Activated CD4-positive, alpha-beta T cell treated with anti-CD3 and anti-CD28 coated beads for 36 hours (primary cell): ENCODE measurements at regions of chr1 and their contacts with region 1.

Region 1: GRCh38 chr1:213987927-213988506 is at the start of gene PROX1:
- DNase-seq: peak; percentile 72
- ATAC-seq: peak; percentile 86
- H3K4me3 Mint-ChIP-seq: peak within 1 kb of the TSS; percentile 81
- H3K27ac Mint-ChIP-seq: peak within 1 kb of the TSS; percentile 51
- H3K4me1 Mint-ChIP-seq: peaks cover 37% of the 10 kb centered on the region
- H3K27me3 Mint-ChIP-seq: peaks cover 91% of the 10 kb centered on the region
- total RNA-seq, gene PROX1: 0.09 to 0.14 TPM

Region 2: DNA sequence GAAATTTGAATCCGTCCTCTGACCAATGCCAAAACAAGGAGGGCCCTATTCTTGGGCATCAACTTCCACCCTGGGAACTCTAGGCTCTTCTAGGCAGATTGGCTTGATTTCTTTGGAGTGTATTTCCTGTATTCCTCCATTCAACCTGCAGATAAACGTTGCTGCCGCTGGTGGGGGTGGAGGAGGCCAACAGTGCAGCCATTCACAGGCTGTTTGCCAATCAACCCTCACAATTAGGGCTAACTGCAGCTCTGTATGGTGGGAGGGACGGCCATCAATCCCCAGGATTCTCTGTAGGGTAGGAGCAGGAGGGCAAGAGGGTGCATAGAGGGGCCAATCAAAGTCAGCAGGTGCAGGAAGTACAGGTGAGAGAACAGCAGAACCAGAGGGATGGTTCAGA is 273.4 kb before region 1 on chr1:
- CTCF ChIA-PET with region 1: no interaction called
- POLR2A ChIA-PET with region 1: no interaction called
- intact Hi-C with region 1: no loop called
- DNase-seq: no peak
- ATAC-seq: no peak
- H3K4me3 Mint-ChIP-seq: no peak overlapping the region
- H3K27ac Mint-ChIP-seq: no peak overlapping the region
- H3K4me1 Mint-ChIP-seq: peaks cover 14% of the 10 kb centered on the region
- H3K27me3 Mint-ChIP-seq: no peaks in the 10 kb centered on the region

Region 3: DNA sequence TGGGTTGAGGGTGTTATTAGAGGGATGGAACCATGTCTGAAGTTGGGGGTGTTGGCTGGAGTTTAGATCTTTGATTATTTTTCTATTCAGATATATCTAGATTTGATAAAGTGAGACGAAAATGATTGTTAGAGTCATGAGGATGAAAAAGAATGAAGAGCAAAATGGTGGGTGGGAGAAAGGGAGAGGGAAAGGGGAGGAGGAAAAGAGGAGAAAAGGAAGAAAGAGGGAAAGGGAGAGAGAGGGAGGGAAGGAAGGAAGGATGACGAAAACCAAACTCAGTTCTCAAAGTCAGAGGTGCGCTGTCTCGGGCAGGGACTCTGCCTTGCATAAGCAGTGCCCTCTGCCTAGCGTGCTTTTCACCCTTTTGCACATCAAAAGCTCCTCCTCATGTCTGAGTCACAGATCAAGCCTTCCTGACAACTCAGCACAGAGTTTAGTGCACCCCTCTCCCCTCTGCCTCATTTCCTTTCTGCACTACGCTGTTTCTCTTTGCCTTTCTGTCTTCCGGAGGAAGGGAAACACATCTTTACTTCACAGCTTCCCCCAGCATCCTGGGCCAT is 226.1 kb before region 1 on chr1:
- CTCF ChIA-PET with region 1: no interaction called
- POLR2A ChIA-PET with region 1: no interaction called
- intact Hi-C with region 1: loop called in 1 of 2 experiments (anchors 5 kb)
- DNase-seq: peak; percentile 69
- ATAC-seq: peak; percentile 100
- H3K4me3 Mint-ChIP-seq: peak overlapping the region; percentile 6
- H3K27ac Mint-ChIP-seq: peak overlapping the region; percentile 58
- H3K4me1 Mint-ChIP-seq: peaks cover 20% of the 10 kb centered on the region
- H3K27me3 Mint-ChIP-seq: no peaks in the 10 kb centered on the region

Region 4: GRCh38 chr1:213779228-213779883 is 208.7 kb before region 1 on chr1:
- CTCF ChIA-PET with region 1: no interaction called
- POLR2A ChIA-PET with region 1: no interaction called
- intact Hi-C with region 1: no loop called
- DNase-seq: no peak
- ATAC-seq: no peak
- H3K4me3 Mint-ChIP-seq: no peak overlapping the region
- H3K27ac Mint-ChIP-seq: no peak overlapping the region
- H3K4me1 Mint-ChIP-seq: peaks cover 14% of the 10 kb centered on the region
- H3K27me3 Mint-ChIP-seq: peaks cover 12% of the 10 kb centered on the region

Region 5: GRCh38 chr1:214012418-214012817 is 24.4 kb after region 1 on chr1:
- CTCF ChIA-PET with region 1: no interaction called
- POLR2A ChIA-PET with region 1: no interaction called
- intact Hi-C with region 1: no loop called
- DNase-seq: no peak
- ATAC-seq: no peak
- H3K4me3 Mint-ChIP-seq: no peak overlapping the region
- H3K27ac Mint-ChIP-seq: no peak overlapping the region
- H3K4me1 Mint-ChIP-seq: no peaks in the 10 kb centered on the region
- H3K27me3 Mint-ChIP-seq: peaks cover 2% of the 10 kb centered on the region

Region 6: GRCh38 chr1:215566556-215567490 is 1578.8 kb after region 1 on chr1 and contains the start of gene KCTD3:
- CTCF ChIA-PET with region 1: no interaction called
- POLR2A ChIA-PET with region 1: no interaction called
- intact Hi-C with region 1: loop called in 1 of 2 experiments (anchors 5 kb)
- DNase-seq: peak; percentile 76
- ATAC-seq: peak; percentile 60
- H3K4me3 Mint-ChIP-seq: peak within 1 kb of the TSS; percentile 92
- H3K27ac Mint-ChIP-seq: peak within 1 kb of the TSS; percentile 87
- H3K4me1 Mint-ChIP-seq: peaks cover 30% of the 10 kb centered on the region
- H3K27me3 Mint-ChIP-seq: peaks cover 8% of the 10 kb centered on the region
- total RNA-seq, gene KCTD3: 4.0 to 4.2 TPM